Esophagus muscularis mucosa (tissue), 4 donors: ENCODE measurements at regions of chr1 and their contacts with region 1.

Region 1: GRCh38 chr1:16727190-16728111 is 12.9 kb upstream of the RNU1-4 start:
- DNase-seq: peak; percentile 97
- H3K4me3 ChIP-seq: no peak overlapping the region
- H3K27ac ChIP-seq: no peak overlapping the region
- H3K4me1 ChIP-seq: no peaks in the 10 kb centered on the region
- H3K27me3 ChIP-seq: peaks cover 0 to 34% (median 12%) of the 10 kb centered on the region in 4 donors
- CTCF ChIP-seq: no peak
- EP300 ChIP-seq: no peak
- POLR2A ChIP-seq: no peak

Region 2: DNA sequence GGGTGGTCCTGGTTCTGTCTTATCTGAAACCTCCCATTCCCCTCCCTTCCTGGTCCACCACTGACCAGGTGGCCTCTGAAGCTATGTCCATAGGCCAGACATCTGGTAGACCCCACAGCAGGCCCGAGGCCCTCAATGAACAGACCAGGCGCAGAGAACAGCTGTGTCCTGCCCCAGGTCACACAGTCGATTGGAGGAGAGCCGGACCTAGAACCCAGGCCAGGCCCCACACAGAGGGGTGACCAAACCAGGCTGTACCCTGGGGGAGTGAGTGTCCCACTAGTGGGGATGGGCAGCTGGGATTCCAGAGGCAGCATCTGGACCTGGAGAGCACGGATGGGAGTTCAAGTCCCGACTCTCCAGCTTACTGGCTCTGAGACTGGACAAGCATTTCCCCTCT is 242.5 kb before region 1 on chr1:
- intact Hi-C with region 1: no loop called
- DNase-seq: no peak
- H3K4me3 ChIP-seq: no peak overlapping the region
- H3K27ac ChIP-seq: no peak overlapping the region
- H3K4me1 ChIP-seq: no peaks in the 10 kb centered on the region
- H3K27me3 ChIP-seq: no peaks in the 10 kb centered on the region
- CTCF ChIP-seq: no peak
- EP300 ChIP-seq: no peak
- POLR2A ChIP-seq: no peak

Region 3: GRCh38 chr1:16921391-16922185 is 194.1 kb after region 1 on chr1 and contains the start of gene CROCC:
- intact Hi-C with region 1: loop called (anchors 10 kb)
- DNase-seq: no peak
- H3K4me3 ChIP-seq: no peak within 1 kb of the TSS
- H3K27ac ChIP-seq: no peak within 1 kb of the TSS
- H3K4me1 ChIP-seq: peaks cover 6 to 23% (median 10%) of the 10 kb centered on the region in 4 donors
- H3K27me3 ChIP-seq: peaks cover 0 to 14% (median 4%) of the 10 kb centered on the region in 4 donors
- CTCF ChIP-seq: no peak
- EP300 ChIP-seq: no peak
- POLR2A ChIP-seq: no peak
- total RNA-seq, gene CROCC: 17.6 to 36.3 (median 23.0) TPM